Tibial artery (tissue), 4 donors: ENCODE measurements at regions of chr2 and their contacts with region 1.

Region 1: DNA sequence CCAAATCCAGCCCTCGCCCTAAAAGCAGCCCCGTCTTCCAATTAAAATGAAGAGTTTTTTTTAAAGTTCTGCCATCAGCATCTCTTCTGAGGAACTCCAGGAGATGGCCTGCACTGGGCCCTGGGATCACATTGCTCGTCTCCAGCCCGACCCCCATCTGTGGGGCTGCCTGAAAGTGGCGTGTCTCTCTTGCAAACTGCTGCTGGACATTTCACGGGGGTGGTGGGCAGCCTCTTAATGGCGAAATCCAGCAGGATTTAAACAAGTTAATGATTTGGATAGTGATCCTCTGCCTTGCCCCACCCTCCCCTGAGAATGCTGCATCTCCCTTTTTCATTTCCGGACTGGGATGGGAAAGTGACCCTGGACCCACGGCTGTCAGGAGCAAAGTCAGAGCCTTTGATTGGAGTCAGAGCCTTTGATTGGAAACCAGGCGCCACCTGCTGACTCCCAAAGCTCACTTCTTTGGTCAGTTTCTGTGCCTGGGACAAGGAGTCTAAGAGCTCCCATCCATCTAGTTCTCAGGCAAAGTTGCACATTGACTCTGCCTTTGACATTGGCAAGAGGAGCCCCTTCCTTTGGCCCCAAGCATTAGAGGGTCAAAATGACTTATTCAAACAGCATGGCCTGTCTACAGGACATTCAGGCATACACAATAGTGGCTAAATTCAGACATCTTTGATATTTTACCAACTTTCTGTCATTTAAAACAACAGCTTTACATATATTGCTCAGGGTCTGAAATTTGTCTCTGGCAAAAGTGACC is 155.2 kb downstream of the SH3BP4 start:
- DNase-seq: peak; percentile 57 to 76
- H3K4me3 ChIP-seq: no peak overlapping the region
- H3K27ac ChIP-seq: no peak overlapping the region
- H3K4me1 ChIP-seq: no peaks in the 10 kb centered on the region
- H3K27me3 ChIP-seq: no peaks in the 10 kb centered on the region
- CTCF ChIP-seq: peak; percentile 70 to 74

Region 2: DNA sequence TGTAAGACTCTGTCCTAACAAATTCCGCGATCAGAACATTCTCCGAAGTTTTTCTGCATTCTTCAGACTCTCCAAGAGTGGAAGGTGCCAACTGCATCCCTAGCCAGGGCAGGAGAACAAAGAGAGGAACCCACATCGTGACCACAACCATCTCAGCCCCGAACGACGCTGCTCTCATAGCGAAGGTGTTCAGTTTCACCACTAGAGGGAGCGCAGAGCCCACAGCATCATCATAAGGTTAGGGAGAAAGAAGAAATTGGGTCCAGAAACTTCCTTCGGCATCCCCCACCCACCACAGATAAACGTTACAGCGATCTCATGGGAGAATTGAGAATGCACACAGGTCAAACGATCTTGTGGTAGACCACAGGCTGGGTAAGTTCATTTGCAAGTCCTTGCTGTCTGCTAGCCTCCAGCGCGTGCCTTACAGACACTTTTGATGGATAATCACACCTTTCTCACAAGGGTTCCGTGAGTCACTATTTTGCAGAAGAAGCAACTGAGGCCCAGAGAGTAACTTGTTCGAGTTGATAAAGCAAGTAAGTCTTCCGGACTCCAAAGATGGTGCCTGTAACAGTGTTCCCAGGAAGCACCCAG is 556.4 kb before region 1 on chr2:
- intact Hi-C with region 1: loop called (anchors 5 kb)
- DNase-seq: peak; percentile 57 to 77
- H3K4me3 ChIP-seq: no peak overlapping the region
- H3K27ac ChIP-seq: no peak overlapping the region
- H3K4me1 ChIP-seq: no peaks in the 10 kb centered on the region
- H3K27me3 ChIP-seq: peaks cover 0 to 26% of the 10 kb centered on the region in 2 donors
- CTCF ChIP-seq: peak; percentile 92 to 93

Region 3: GRCh38 chr2:234661175-234661574 is 445.9 kb before region 1 on chr2:
- intact Hi-C with region 1: loop called (anchors 5 kb)
- DNase-seq: no peak
- H3K4me3 ChIP-seq: no peak overlapping the region
- H3K27ac ChIP-seq: no peak overlapping the region
- H3K4me1 ChIP-seq: no peaks in the 10 kb centered on the region
- H3K27me3 ChIP-seq: peaks cover 0 to 4% of the 10 kb centered on the region in 2 donors
- CTCF ChIP-seq: no peak